ENCODE measurements at regions of chr12 and their contacts with region 1.

Region 1: GRCh38 chr12:77152623-77153193 is 87.3 kb upstream of the E2F7 start:
- DNase-seq: peak; percentile 63
- ATAC-seq: 0 out of 2 replicates have a peak, but pooled peaks have one; percentile 16
- H3K4me3 ChIP-seq: no peak overlapping the region
- H3K27ac ChIP-seq: no peak overlapping the region
- H3K4me1 ChIP-seq: peaks cover 15% of the 10 kb centered on the region
- H3K27me3 ChIP-seq: no peaks in the 10 kb centered on the region
- CTCF ChIP-seq: peak; percentile 74

Region 2: DNA sequence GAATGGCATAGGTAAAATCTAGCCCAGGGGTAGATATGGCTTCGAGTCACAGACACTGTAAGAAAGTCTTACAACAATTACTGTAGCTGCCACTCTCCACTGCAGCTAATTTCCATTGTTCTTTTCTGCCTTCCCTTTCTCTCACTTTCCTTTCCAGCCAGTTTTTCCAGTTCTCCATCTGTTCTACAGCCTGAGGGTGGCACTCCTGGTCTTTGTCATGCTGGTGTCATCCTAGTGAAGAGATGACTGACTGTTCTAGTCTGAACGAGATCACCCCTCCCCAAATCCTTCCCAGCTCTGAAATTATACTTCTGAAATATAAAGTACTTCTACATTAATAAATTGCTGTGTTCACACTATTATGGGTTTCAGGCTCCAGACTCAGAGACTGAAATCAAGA is 199.7 kb before region 1 on chr12:
- CTCF ChIA-PET with region 1: no interaction called
- POLR2A ChIA-PET with region 1: no interaction called
- intact Hi-C with region 1: loop called (anchors 10 kb)
- DNase-seq: peak; percentile 89
- ATAC-seq: peak; percentile 96
- H3K4me3 ChIP-seq: no peak overlapping the region
- H3K27ac ChIP-seq: no peak overlapping the region
- H3K4me1 ChIP-seq: peaks cover 12% of the 10 kb centered on the region; the same call in 1 of the 2 replicates
- H3K27me3 ChIP-seq: no peaks in the 10 kb centered on the region
- CTCF ChIP-seq: peak; percentile 77

Region 3: DNA sequence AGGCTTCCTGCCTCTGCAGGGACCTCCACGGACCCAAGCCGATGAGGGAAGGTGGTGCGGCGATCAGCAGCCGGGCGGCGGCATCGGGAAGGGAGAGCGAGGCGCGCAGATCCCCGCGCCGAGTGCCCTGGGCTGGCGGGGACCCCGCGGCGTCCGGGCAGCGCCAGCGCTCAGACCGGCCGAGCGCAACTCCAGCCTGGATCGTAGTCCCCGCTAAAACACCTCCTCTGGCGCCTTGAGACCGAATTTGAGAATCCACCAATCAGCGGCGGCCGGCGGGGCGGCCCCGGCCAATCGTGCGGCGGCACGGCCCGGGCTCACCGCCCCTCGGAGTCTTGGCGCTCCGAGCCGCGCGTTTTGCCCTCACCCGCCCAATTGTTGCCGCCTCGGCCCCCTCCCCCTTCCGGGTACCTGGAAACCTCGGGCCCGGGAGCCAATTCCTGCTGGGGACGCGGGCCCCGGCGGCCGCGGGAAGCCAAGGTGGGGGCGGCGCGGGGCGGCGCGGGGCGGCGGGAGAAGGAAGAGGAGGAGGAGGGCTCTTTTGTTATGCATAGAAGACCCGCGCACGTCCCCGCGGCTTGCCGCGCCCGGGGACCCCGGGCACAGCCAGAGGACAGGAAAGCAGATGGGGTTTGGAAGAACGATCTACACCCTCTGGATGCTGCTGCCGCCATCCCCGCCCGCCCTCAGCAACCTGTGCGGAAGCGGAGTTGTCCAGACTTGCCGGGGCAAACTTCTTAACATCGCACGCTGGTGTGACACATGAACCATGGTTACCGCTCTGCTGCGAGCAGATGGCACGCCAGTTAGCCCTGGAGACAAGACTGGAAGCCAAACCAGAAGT is 87.1 kb before region 1 on chr12 and contains the start of gene E2F7:
- CTCF ChIA-PET with region 1: no interaction called
- POLR2A ChIA-PET with region 1: interaction called, 4 read pairs
- intact Hi-C with region 1: loop called (anchors 1 kb)
- DNase-seq: peak; percentile 97
- ATAC-seq: peak; percentile 83
- H3K4me3 ChIP-seq: peak within 1 kb of the TSS; percentile 94
- H3K27ac ChIP-seq: peak within 1 kb of the TSS; percentile 84
- H3K4me1 ChIP-seq: peaks cover 35% of the 10 kb centered on the region
- H3K27me3 ChIP-seq: no peaks in the 10 kb centered on the region
- CTCF ChIP-seq: no peak
- total RNA-seq, gene E2F7: 17.2 and 19.0 TPM in 2 replicates

Region 4: DNA sequence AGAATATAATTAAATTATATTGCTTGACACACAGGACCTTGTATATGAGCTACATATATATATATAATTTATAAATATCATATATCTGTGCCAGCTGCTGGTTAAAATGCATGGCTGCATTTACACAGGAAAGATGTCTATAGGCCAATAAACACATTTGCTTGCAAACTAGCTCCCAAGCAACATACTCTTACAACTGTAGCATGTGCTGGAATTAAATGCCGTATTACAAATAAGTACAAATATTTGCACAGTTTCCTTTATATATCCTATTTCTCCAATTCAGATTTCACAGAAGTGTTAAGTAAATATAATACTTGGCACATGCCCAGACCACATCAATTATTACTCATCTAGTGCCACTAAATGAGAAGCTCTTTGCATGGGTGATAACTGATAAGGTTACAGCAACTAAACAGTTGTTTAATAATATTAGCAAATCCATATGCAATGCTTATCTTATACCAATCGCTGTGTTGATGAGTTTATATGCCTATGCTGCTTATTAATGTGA is 20.7 kb before region 1 on chr12:
- CTCF ChIA-PET with region 1: no interaction called
- POLR2A ChIA-PET with region 1: interaction called, 6 read pairs
- intact Hi-C with region 1: loop called (anchors 1 kb)
- DNase-seq: peak; percentile 77
- ATAC-seq: peak; percentile 92
- H3K4me3 ChIP-seq: no peak overlapping the region
- H3K27ac ChIP-seq: no peak overlapping the region
- H3K4me1 ChIP-seq: no peaks in the 10 kb centered on the region; the same call in 1 of the 2 replicates
- H3K27me3 ChIP-seq: no peaks in the 10 kb centered on the region
- CTCF ChIP-seq: no peak

Region 5: DNA sequence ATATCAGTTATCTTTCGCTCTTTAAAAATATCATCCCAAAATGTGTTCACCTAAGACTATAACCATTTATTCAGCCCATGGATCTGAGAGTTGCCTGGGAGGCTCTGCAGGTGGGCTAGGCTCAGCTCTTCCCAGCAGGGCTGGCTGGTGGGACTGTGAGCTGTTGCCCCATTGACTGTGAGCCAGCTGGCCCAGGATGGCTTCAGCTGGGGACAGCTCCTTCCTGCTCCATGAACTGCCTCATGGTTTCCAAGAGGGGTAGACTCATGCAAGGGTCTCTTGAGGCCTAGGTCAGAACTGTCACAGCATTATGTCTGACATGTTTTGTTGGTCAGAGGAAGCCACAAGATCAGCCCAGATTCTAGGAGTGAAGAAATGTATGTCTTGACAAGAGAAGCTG is 26.8 kb after region 1 on chr12:
- CTCF ChIA-PET with region 1: no interaction called
- POLR2A ChIA-PET with region 1: no interaction called
- intact Hi-C with region 1: no loop called
- DNase-seq: no peak
- ATAC-seq: no peak
- H3K4me3 ChIP-seq: no peak overlapping the region
- H3K27ac ChIP-seq: no peak overlapping the region
- H3K4me1 ChIP-seq: no peaks in the 10 kb centered on the region
- H3K27me3 ChIP-seq: peaks cover 9% of the 10 kb centered on the region
- CTCF ChIP-seq: no peak

Region 6: GRCh38 chr12:77238368-77238767 is 85.7 kb after region 1 on chr12:
- CTCF ChIA-PET with region 1: no interaction called
- POLR2A ChIA-PET with region 1: no interaction called
- intact Hi-C with region 1: no loop called
- DNase-seq: no peak
- ATAC-seq: no peak
- H3K4me3 ChIP-seq: no peak overlapping the region
- H3K27ac ChIP-seq: no peak overlapping the region
- H3K4me1 ChIP-seq: no peaks in the 10 kb centered on the region
- H3K27me3 ChIP-seq: peaks cover 8% of the 10 kb centered on the region; the same call in 1 of the 2 replicates
- CTCF ChIP-seq: no peak

Region 7: GRCh38 chr12:77314378-77315052 is 161.8 kb after region 1 on chr12:
- CTCF ChIA-PET with region 1: no interaction called
- POLR2A ChIA-PET with region 1: no interaction called
- intact Hi-C with region 1: loop called (anchors 1 kb)
- DNase-seq: no peak
- ATAC-seq: no peak
- H3K4me3 ChIP-seq: no peak overlapping the region
- H3K27ac ChIP-seq: no peak overlapping the region
- H3K4me1 ChIP-seq: 0 out of 2 replicates have a peak, but pooled peaks cover 5% of the 10 kb centered on the region
- H3K27me3 ChIP-seq: no peaks in the 10 kb centered on the region
- CTCF ChIP-seq: no peak

Region 8: DNA sequence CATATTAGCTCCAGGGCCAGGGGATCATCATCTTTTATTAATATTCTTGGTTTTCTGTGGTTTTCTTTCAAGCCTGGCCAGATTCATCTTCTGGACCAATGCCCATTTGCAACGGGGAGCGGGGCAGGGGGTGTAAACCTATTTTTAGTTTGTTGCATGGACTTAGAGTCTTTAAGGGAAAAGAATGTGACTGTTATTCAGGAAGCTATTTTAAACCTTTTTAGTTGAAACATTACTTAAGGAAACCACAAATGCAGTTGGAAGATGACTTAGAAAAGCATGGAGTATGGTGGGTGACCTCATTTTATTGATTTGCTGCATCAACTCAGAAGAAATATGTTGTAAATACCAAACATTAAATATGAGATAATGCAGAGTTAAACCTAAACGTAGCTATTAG is 281.1 kb after region 1 on chr12:
- CTCF ChIA-PET with region 1: no interaction called
- POLR2A ChIA-PET with region 1: no interaction called
- intact Hi-C with region 1: no loop called
- DNase-seq: no peak
- ATAC-seq: no peak
- H3K4me3 ChIP-seq: no peak overlapping the region
- H3K27ac ChIP-seq: no peak overlapping the region
- H3K4me1 ChIP-seq: no peaks in the 10 kb centered on the region
- H3K27me3 ChIP-seq: 0 out of 2 replicates have a peak, but pooled peaks cover 8% of the 10 kb centered on the region
- CTCF ChIP-seq: no peak

Region 9: GRCh38 chr12:77685112-77685511 is 532.4 kb after region 1 on chr12:
- CTCF ChIA-PET with region 1: interaction called, 9 read pairs
- POLR2A ChIA-PET with region 1: no interaction called
- intact Hi-C with region 1: loop called (anchors 1 kb)
- DNase-seq: peak; percentile 80
- ATAC-seq: peak; percentile 92
- H3K4me3 ChIP-seq: no peak overlapping the region
- H3K27ac ChIP-seq: no peak overlapping the region
- H3K4me1 ChIP-seq: no peaks in the 10 kb centered on the region
- H3K27me3 ChIP-seq: no peaks in the 10 kb centered on the region; the same call in 1 of the 2 replicates
- CTCF ChIP-seq: peak; percentile 76

Measured in PC-3 (cell line).